PC-3 (cell line): ENCODE measurements at regions of chr10 and their contacts with region 1.

Region 1: GRCh38 chr10:29804025-29804852 is 169.5 kb upstream of the SVIL start:
- DNase-seq: peak; percentile 97
- ATAC-seq: peak; percentile 79
- H3K4me3 ChIP-seq: peak overlapping the region; percentile 49; the same call in 1 of the 2 replicates
- H3K27ac ChIP-seq: peak overlapping the region; percentile 100
- H3K4me1 ChIP-seq: peaks cover 50% of the 10 kb centered on the region
- H3K27me3 ChIP-seq: no peaks in the 10 kb centered on the region
- CTCF ChIP-seq: no peak

Region 2: GRCh38 chr10:29443745-29444523 is 360.3 kb before region 1 on chr10:
- CTCF ChIA-PET with region 1: no interaction called
- POLR2A ChIA-PET with region 1: no interaction called
- intact Hi-C with region 1: no loop called
- DNase-seq: no peak
- ATAC-seq: no peak
- H3K4me3 ChIP-seq: no peak overlapping the region
- H3K27ac ChIP-seq: no peak overlapping the region
- H3K4me1 ChIP-seq: no peaks in the 10 kb centered on the region
- H3K27me3 ChIP-seq: no peaks in the 10 kb centered on the region
- CTCF ChIP-seq: no peak

Region 3: DNA sequence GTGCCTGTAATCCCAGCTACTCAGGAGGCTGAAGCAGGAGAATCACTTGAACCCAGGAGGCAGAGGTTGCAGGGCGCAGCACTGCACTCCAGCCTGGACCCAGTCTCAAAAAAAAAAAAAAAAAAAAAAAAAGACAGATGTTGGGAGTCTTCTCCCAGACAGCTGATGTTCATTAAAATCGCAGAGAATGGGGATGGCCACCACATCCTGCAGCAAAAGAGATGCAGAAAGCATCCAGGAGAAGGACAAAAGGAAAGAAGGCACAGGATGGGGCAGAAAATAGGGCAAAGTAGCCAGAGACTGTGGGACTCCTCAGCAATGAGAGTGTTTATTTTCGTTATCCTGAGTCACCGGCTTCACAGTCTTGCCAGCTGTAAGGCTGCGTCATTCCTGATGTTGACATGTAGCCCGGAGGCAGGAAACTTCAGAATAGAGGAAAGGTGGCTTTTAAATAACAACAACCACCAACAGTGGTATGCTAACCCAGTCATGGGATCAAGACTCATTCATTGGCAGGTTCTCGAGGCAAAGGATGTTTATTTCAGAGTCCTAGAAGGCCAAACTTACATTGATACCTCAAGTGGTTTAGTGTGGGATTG is 20.0 kb before region 1 on chr10:
- CTCF ChIA-PET with region 1: no interaction called
- POLR2A ChIA-PET with region 1: no interaction called
- intact Hi-C with region 1: loop called (anchors 1 kb)
- DNase-seq: peak; percentile 98
- ATAC-seq: peak; percentile 97
- H3K4me3 ChIP-seq: no peak overlapping the region
- H3K27ac ChIP-seq: peak overlapping the region; percentile 90
- H3K4me1 ChIP-seq: peaks cover 15% of the 10 kb centered on the region
- H3K27me3 ChIP-seq: no peaks in the 10 kb centered on the region
- CTCF ChIP-seq: no peak